Activated CD4-positive, alpha-beta T cell treated with anti-CD3 and anti-CD28 coated beads for 36 hours (primary cell): ENCODE measurements at regions of chr1 and their contacts with region 1.

Region 1: DNA sequence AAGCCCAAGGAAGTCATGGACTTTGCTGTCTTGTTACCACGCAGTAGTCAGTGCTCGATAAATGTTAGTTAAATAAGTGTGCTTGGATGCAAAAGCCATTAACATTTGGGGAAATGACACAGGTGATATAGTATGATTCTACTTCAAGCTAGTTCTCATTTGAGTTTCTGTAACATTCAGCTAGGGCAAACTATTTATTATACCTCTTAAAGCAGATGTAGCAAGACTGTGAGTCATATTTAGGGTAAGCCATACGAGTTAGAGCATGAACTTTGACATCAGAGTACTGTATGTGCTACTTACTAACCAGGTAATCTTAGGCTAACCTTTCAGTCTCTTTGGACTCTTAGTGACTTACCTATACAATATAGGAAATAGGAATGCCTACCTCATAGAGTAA is 21.0 kb downstream of the CLCA4 start:
- DNase-seq: no peak
- ATAC-seq: no peak
- H3K4me3 Mint-ChIP-seq: no peak overlapping the region
- H3K27ac Mint-ChIP-seq: no peak overlapping the region
- H3K4me1 Mint-ChIP-seq: no peaks in the 10 kb centered on the region
- H3K27me3 Mint-ChIP-seq: no peaks in the 10 kb centered on the region

Region 2: GRCh38 chr1:88052167-88052566 is 1484.3 kb after region 1 on chr1:
- CTCF ChIA-PET with region 1: no interaction called
- POLR2A ChIA-PET with region 1: no interaction called
- intact Hi-C with region 1: loop called in 1 of 2 experiments (anchors 10 kb)
- DNase-seq: no peak
- ATAC-seq: no peak
- H3K4me3 Mint-ChIP-seq: no peak overlapping the region
- H3K27ac Mint-ChIP-seq: no peak overlapping the region
- H3K4me1 Mint-ChIP-seq: no peaks in the 10 kb centered on the region
- H3K27me3 Mint-ChIP-seq: peaks cover 8% of the 10 kb centered on the region